ENCODE measurements at regions of chr1 and their contacts with region 1.

Region 1: GRCh38 chr1:93615582-93616150 is 66.0 kb downstream of the BCAR3 start:
- DNase-seq: peak; percentile 60
- H3K4me3 Mint-ChIP-seq: no peak overlapping the region
- H3K27ac Mint-ChIP-seq: peak overlapping the region; percentile 97
- H3K4me1 Mint-ChIP-seq: peaks cover 65% of the 10 kb centered on the region
- H3K27me3 Mint-ChIP-seq: no peaks in the 10 kb centered on the region
- CTCF ChIP-seq: no peak

Region 2: GRCh38 chr1:92230736-92231135 is 1384.9 kb before region 1 on chr1:
- CTCF ChIA-PET with region 1: no interaction called
- POLR2A ChIA-PET with region 1: no interaction called
- intact Hi-C with region 1: no loop called
- DNase-seq: no peak
- H3K4me3 Mint-ChIP-seq: no peak overlapping the region
- H3K27ac Mint-ChIP-seq: no peak overlapping the region
- H3K4me1 Mint-ChIP-seq: no peaks in the 10 kb centered on the region
- H3K27me3 Mint-ChIP-seq: no peaks in the 10 kb centered on the region
- CTCF ChIP-seq: no peak

Region 3: DNA sequence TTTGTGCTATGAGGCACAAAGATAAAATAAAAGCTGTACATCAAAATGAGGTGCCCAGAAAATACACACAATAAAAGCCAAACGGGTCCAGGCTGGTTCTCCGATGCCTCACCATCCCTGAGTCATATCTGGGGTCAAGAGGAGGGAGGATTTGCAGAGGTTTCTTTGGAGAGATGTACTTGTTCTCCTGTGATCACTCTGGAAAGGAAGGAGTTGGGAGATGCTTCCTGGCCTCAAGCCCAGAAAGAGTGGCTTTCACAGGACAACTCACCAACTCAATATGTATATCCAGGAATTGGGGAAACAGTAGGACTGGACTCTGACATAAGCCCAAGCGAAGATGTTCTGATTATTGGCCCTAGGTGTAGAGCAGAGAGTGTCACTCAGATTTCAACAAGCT is 706.3 kb before region 1 on chr1:
- CTCF ChIA-PET with region 1: no interaction called
- POLR2A ChIA-PET with region 1: no interaction called
- intact Hi-C with region 1: no loop called
- DNase-seq: peak; percentile 94
- H3K4me3 Mint-ChIP-seq: no peak overlapping the region
- H3K27ac Mint-ChIP-seq: peak overlapping the region; percentile 56
- H3K4me1 Mint-ChIP-seq: peaks cover 26% of the 10 kb centered on the region
- H3K27me3 Mint-ChIP-seq: no peaks in the 10 kb centered on the region
- CTCF ChIP-seq: no peak

Region 4: GRCh38 chr1:93585059-93585966 is 30.4 kb before region 1 on chr1:
- CTCF ChIA-PET with region 1: interaction called, 3 read pairs
- POLR2A ChIA-PET with region 1: interaction called, 12 read pairs
- intact Hi-C with region 1: no loop called
- DNase-seq: peak; percentile 85
- H3K4me3 Mint-ChIP-seq: peak overlapping the region; percentile 73
- H3K27ac Mint-ChIP-seq: peak overlapping the region; percentile 95
- H3K4me1 Mint-ChIP-seq: peaks cover 34% of the 10 kb centered on the region
- H3K27me3 Mint-ChIP-seq: no peaks in the 10 kb centered on the region
- CTCF ChIP-seq: no peak

Region 5: DNA sequence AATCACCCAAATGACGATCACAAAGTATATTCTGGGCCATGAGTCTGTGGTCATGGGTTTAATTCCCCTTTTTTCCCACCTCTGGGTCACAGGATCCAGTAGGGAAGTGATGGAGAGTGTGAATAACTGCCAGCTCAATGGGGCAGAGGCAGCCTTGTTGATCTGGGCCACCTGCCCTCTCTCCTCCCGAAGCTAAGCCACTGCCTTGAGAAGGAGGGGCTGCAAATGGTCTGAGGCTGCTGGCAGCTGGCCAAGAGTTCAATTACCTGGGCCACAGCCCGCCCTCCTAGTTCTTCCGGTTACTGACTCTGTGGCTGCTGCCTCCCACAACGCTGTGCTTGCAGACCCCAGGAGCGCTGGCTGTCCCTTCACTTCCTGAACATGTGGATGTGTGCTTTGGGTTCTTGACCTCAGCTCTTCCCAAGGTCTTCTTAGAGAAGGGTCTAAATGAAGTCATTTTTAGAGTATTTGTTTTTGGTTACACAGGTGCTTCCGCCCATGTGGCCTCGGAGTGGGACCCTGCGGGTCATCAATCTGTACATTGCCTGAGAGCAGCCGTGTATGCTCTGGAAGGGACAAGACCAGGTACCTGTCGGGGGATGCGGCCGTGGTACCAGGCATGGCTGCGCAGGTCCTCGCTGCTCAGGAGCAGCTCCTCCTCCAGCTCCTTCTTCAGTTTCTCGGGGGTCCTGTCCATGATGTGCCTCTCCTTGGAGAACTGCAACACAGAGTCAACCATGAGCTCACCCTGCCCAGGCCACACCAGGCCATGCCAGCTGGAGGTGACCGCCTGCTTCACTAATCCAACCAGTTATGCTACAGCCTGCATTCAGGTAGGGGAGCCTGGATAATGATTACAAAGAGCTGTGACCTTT is 23.8 kb before region 1 on chr1:
- CTCF ChIA-PET with region 1: interaction called, 5 read pairs
- POLR2A ChIA-PET with region 1: interaction called, 33 read pairs
- intact Hi-C with region 1: no loop called
- DNase-seq: peak; percentile 46
- H3K4me3 Mint-ChIP-seq: no peak overlapping the region
- H3K27ac Mint-ChIP-seq: peak overlapping the region; percentile 49
- H3K4me1 Mint-ChIP-seq: peaks cover 59% of the 10 kb centered on the region
- H3K27me3 Mint-ChIP-seq: no peaks in the 10 kb centered on the region
- CTCF ChIP-seq: no peak

Region 6: DNA sequence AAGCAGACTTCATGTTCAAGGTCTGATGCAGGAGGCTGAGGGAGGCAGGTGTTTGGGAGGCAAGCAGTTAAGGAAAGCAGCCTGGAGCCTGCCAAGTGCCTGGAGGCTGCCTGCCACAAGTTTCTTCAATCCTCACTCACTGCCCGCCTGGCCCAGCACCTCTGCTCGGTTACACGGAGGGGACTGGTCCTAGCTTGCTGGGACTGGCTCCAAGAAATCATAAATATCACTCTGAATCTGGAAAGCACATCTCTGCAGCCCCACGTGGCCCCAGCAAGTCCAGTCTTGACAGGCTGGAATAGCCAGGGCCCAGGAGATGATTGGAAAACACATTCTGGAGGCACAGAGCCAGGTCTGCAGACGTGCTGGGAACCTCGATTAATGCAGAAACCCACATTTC is 18.0 kb before region 1 on chr1:
- CTCF ChIA-PET with region 1: interaction called, 5 read pairs
- POLR2A ChIA-PET with region 1: interaction called, 33 read pairs
- intact Hi-C with region 1: no loop called
- DNase-seq: peak; percentile 88
- H3K4me3 Mint-ChIP-seq: peak overlapping the region; percentile 34
- H3K27ac Mint-ChIP-seq: no peak overlapping the region
- H3K4me1 Mint-ChIP-seq: peaks cover 71% of the 10 kb centered on the region
- H3K27me3 Mint-ChIP-seq: no peaks in the 10 kb centered on the region
- CTCF ChIP-seq: no peak

Region 7: GRCh38 chr1:93944656-93945055 is 329.0 kb after region 1 on chr1:
- CTCF ChIA-PET with region 1: no interaction called
- POLR2A ChIA-PET with region 1: no interaction called
- intact Hi-C with region 1: no loop called
- DNase-seq: no peak
- H3K4me3 Mint-ChIP-seq: no peak overlapping the region
- H3K27ac Mint-ChIP-seq: no peak overlapping the region
- H3K4me1 Mint-ChIP-seq: peaks cover 6% of the 10 kb centered on the region
- H3K27me3 Mint-ChIP-seq: no peaks in the 10 kb centered on the region
- CTCF ChIP-seq: no peak